ENCODE measurements at regions of chr17 and their contacts with region 1.

Region 1: DNA sequence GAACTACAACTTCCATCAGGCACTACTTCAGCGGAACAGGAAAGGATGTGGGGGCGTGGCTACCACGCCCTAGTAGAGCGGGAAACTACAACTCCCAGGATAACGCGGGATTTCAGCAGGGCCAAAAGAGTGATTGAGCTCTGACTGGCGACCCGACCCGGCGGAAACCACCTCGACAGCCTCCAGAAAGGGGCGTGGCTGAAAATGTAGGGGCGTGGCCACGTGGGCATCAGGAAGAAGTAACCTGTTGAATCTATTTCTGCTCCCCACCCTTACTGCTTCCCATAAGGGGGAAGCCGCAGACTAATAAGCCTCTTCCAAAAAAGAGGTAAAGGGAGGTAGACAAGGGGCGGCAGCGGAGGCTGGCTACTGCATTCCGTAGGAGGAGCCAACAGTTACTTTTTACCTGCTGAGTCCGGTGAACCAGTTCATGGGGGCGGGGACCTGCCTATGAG is at the start of gene TMEM102:
- DNase-seq: peak; percentile 98 to 99 (median 99)
- H3K4me3 ChIP-seq: peak within 1 kb of the TSS; percentile 89
- H3K4me3 Mint-ChIP-seq: peak within 1 kb of the TSS; percentile 89 to 96 (median 94)
- H3K27ac ChIP-seq: peak within 1 kb of the TSS; percentile 86
- H3K27ac Mint-ChIP-seq: peak within 1 kb of the TSS; percentile 94 to 99 (median 97)
- H3K4me1 ChIP-seq: peaks cover 37% of the 10 kb centered on the region
- H3K4me1 Mint-ChIP-seq: peaks cover 22 to 47% (median 34%) of the 10 kb centered on the region in 4 donors
- H3K27me3 ChIP-seq: peaks cover 17% of the 10 kb centered on the region
- H3K27me3 Mint-ChIP-seq: peaks cover 9 to 10% of the 10 kb centered on the region in 2 donors
- total RNA-seq, gene TMEM102: 20.8 to 21.8 TPM

Region 2: DNA sequence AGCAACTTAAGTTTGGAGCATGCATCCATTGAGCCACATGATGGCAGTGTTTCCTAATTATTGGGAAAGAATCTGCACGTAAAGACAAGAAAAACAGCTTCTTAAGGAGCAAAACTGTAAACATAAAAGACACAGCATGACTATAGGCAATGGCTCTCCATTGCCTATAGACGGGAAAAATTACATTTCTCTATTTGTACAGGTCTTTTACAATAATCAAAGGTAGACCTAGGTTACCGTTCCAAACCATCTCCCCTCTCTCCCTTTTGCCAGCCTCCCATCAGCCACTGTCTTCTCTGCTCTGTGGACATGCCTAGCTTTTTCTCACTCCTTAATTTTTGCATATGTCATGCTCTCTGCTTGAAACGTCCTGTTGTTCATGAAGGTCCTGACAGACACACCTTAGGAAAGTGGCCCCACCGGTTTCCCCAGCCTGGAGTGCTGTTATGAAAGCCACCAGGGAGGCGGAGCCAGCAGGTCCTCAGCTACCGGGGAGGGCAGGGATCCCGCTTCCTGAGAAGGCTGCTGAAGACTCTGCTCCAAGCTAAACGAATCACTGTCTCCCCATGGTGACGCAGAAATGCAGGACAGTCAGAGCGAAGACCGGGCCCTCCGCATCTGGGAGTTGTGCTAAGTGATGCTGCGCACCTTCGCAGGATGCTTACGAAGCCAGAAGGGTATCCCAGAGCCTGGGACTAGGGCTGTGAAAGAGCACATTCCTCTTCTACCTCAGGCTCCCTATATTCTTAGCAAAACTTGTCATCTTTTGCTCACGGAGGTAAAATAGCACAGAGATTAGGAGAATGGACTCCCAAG is 389.1 kb before region 1 on chr17:
- CTCF ChIA-PET with region 1: interaction called, 4 read pairs
- POLR2A ChIA-PET with region 1: interaction called, 5 read pairs
- intact Hi-C with region 1: loop called (anchors 2 kb)
- DNase-seq: peak; percentile 60 to 79 (median 74)
- H3K4me3 ChIP-seq: peak overlapping the region; percentile 67 to 84
- H3K4me3 Mint-ChIP-seq: peak overlapping the region; percentile 83 to 94 (median 90)
- H3K27ac ChIP-seq: peak overlapping the region; percentile 76
- H3K27ac Mint-ChIP-seq: peak overlapping the region; percentile 88 to 98 (median 95)
- H3K4me1 ChIP-seq: peaks cover 47% of the 10 kb centered on the region
- H3K4me1 Mint-ChIP-seq: peaks cover 15 to 54% (median 27%) of the 10 kb centered on the region in 4 donors
- H3K27me3 ChIP-seq: no peaks in the 10 kb centered on the region
- H3K27me3 Mint-ChIP-seq: peaks cover 2% of the 10 kb centered on the region in 2 donors

Region 3: GRCh38 chr17:7329374-7329996 is 105.8 kb before region 1 on chr17:
- CTCF ChIA-PET with region 1: interaction called, 7 read pairs
- POLR2A ChIA-PET with region 1: interaction called, 28 read pairs
- intact Hi-C with region 1: no loop called
- DNase-seq: peak; percentile 97 to 99 (median 97)
- H3K4me3 ChIP-seq: peak overlapping the region; percentile 94 to 99
- H3K4me3 Mint-ChIP-seq: peak overlapping the region; percentile 97 to 98 (median 98)
- H3K27ac ChIP-seq: peak overlapping the region; percentile 82
- H3K27ac Mint-ChIP-seq: peak overlapping the region; percentile 93 to 99 (median 98)
- H3K4me1 ChIP-seq: peaks cover 49% of the 10 kb centered on the region
- H3K4me1 Mint-ChIP-seq: peaks cover 32 to 58% (median 42%) of the 10 kb centered on the region in 4 donors
- H3K27me3 ChIP-seq: no peaks in the 10 kb centered on the region
- H3K27me3 Mint-ChIP-seq: no peaks in the 10 kb centered on the region

Region 4: GRCh38 chr17:7383742-7384488 is 51.3 kb before region 1 on chr17:
- CTCF ChIA-PET with region 1: interaction called, 14 read pairs
- POLR2A ChIA-PET with region 1: interaction called, 39 read pairs
- intact Hi-C with region 1: loop called (anchors 1 kb)
- DNase-seq: peak; percentile 82 to 87 (median 84)
- H3K4me3 ChIP-seq: peak overlapping the region; percentile 42 to 86
- H3K4me3 Mint-ChIP-seq: peak overlapping the region; percentile 80 to 87 (median 82)
- H3K27ac ChIP-seq: peak overlapping the region; percentile 72
- H3K27ac Mint-ChIP-seq: peak overlapping the region; percentile 88 to 97 (median 94)
- H3K4me1 ChIP-seq: peaks cover 16% of the 10 kb centered on the region
- H3K4me1 Mint-ChIP-seq: peaks cover 8 to 28% (median 13%) of the 10 kb centered on the region in 4 donors
- H3K27me3 ChIP-seq: peaks cover 9% of the 10 kb centered on the region
- H3K27me3 Mint-ChIP-seq: peaks cover 28 to 32% of the 10 kb centered on the region in 2 donors

Region 5: GRCh38 chr17:7478276-7479153 is 43.3 kb after region 1 on chr17:
- CTCF ChIA-PET with region 1: interaction called, 52 read pairs
- POLR2A ChIA-PET with region 1: interaction called, 176 read pairs
- intact Hi-C with region 1: loop called (anchors 1 kb)
- DNase-seq: peak; percentile 70 to 79 (median 74)
- H3K4me3 ChIP-seq: peak overlapping the region; percentile 64 to 83
- H3K4me3 Mint-ChIP-seq: peak overlapping the region; percentile 89 to 97 (median 94)
- H3K27ac ChIP-seq: peak overlapping the region; percentile 97
- H3K27ac Mint-ChIP-seq: peak overlapping the region; percentile 74 to 97 (median 97)
- H3K4me1 ChIP-seq: peaks cover 62% of the 10 kb centered on the region
- H3K4me1 Mint-ChIP-seq: peaks cover 45 to 77% (median 64%) of the 10 kb centered on the region in 4 donors
- H3K27me3 ChIP-seq: no peaks in the 10 kb centered on the region
- H3K27me3 Mint-ChIP-seq: no peaks in the 10 kb centered on the region

Region 6: DNA sequence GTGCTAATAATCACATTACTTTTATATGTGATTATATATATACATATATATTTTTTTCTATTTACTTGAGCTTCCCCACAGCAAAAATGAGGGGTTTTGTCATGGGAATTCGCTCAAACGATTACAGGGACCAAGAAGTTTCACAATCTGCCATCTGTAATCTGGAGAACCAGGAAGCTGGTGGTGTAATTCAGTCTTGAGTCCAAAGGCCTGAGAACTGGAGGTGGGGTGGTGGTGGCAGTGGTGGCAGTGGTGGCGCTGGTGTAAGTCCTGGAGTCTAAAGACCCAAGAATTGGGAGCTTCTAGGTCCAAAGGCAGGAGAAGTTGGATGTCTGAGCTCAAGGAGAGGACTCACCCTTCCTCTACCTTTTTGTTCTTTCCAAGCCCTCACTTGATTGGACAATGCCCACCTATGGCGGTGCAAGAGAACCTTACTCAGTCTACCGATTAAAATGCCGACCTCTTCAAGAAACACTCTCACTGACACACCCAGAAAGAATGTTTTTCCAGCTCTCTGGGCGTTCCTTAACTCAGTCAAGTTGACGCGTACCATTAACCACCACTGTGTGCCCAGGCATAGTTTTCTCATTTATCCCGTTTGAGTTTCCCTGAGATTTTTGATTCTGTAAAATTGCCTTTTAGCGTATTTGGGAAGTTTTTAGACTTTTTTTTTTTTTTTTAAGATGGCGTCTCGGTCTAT is 80.8 kb after region 1 on chr17:
- CTCF ChIA-PET with region 1: interaction called, 25 read pairs
- POLR2A ChIA-PET with region 1: interaction called, 6 read pairs
- intact Hi-C with region 1: no loop called
- DNase-seq: no peak
- H3K4me3 ChIP-seq: no peak overlapping the region
- H3K4me3 Mint-ChIP-seq: no peak overlapping the region
- H3K27ac ChIP-seq: no peak overlapping the region
- H3K27ac Mint-ChIP-seq: peak overlapping the region in 4 of 7 donors; percentile 17 to 74 (median 50)
- H3K4me1 ChIP-seq: no peaks in the 10 kb centered on the region
- H3K4me1 Mint-ChIP-seq: peaks cover 0 to 2% (median 0%) of the 10 kb centered on the region in 4 donors
- H3K27me3 ChIP-seq: no peaks in the 10 kb centered on the region
- H3K27me3 Mint-ChIP-seq: no peaks in the 10 kb centered on the region

Region 7: GRCh38 chr17:7583253-7584109 is 148.2 kb after region 1 on chr17 and contains the start of gene MPDU1:
- CTCF ChIA-PET with region 1: interaction called, 19 read pairs
- POLR2A ChIA-PET with region 1: interaction called, 11 read pairs
- intact Hi-C with region 1: no loop called
- DNase-seq: peak; percentile 95 to 97 (median 97)
- H3K4me3 ChIP-seq: peak within 1 kb of the TSS; percentile 91 to 92
- H3K4me3 Mint-ChIP-seq: peak within 1 kb of the TSS; percentile 99 to 100 (median 100)
- H3K27ac ChIP-seq: peak within 1 kb of the TSS; percentile 97
- H3K27ac Mint-ChIP-seq: peak within 1 kb of the TSS; percentile 99 to 100 (median 100)
- H3K4me1 ChIP-seq: peaks cover 50% of the 10 kb centered on the region
- H3K4me1 Mint-ChIP-seq: peaks cover 20 to 65% (median 43%) of the 10 kb centered on the region in 4 donors
- H3K27me3 ChIP-seq: no peaks in the 10 kb centered on the region
- H3K27me3 Mint-ChIP-seq: no peaks in the 10 kb centered on the region
- total RNA-seq, gene MPDU1: 23.8 to 25.0 TPM

Measured in CD4-positive, alpha-beta memory T cell (primary cell).